ENCODE measurements at regions of chr9 and their contacts with region 1.

Region 1: DNA sequence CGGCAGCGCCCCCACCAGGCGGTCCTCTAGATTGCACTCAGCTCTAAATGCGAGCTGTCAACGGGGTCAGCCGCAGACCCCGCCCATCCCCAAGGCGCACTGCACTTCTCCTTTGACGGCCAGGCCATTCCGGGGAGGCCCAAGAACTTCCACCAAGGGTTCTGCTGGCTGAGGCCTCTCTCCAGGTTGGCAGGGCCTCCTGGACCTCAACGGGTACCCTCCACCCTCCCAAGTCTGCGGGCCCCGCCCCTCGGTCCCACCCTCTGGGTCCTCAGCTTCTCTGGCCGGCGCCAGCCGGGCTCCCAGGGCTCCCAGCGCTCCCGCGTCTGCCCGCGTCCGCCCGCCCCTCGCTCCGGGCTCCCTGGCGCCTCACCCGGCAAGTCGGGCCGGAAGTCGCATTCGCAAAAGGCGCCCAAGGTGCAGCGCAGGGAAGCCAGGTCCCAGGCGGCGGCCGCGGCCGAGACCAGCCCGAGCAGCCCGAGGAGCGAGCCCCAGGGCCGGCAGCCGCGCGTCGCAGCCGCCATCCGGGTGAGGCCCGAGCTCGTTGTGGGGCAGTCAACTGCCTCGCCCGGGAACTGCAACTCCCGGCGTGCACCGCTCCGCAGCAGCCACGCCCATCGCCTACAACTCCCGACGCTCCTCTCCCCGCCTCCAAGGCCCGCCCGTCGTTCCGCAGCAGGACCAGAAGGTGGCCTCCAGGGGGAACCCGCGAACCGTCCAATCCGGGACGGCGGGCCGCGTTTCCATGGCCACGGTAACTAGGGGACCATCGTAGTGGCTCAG is at the start of gene TOR2A:
- DNase-seq: peak; percentile 96
- H3K4me3 ChIP-seq: peak within 1 kb of the TSS; percentile 45 to 55
- H3K27ac ChIP-seq: peak within 1 kb of the TSS; percentile 83 to 89
- H3K4me1 ChIP-seq: no peaks in the 10 kb centered on the region
- H3K27me3 ChIP-seq: no peaks in the 10 kb centered on the region
- CTCF ChIP-seq: peak; percentile 89 to 100 (median 98)
- POLR2A ChIP-seq: peak; percentile 90
- total RNA-seq, gene TOR2A: 20.4 to 24.1 TPM

Region 2: DNA sequence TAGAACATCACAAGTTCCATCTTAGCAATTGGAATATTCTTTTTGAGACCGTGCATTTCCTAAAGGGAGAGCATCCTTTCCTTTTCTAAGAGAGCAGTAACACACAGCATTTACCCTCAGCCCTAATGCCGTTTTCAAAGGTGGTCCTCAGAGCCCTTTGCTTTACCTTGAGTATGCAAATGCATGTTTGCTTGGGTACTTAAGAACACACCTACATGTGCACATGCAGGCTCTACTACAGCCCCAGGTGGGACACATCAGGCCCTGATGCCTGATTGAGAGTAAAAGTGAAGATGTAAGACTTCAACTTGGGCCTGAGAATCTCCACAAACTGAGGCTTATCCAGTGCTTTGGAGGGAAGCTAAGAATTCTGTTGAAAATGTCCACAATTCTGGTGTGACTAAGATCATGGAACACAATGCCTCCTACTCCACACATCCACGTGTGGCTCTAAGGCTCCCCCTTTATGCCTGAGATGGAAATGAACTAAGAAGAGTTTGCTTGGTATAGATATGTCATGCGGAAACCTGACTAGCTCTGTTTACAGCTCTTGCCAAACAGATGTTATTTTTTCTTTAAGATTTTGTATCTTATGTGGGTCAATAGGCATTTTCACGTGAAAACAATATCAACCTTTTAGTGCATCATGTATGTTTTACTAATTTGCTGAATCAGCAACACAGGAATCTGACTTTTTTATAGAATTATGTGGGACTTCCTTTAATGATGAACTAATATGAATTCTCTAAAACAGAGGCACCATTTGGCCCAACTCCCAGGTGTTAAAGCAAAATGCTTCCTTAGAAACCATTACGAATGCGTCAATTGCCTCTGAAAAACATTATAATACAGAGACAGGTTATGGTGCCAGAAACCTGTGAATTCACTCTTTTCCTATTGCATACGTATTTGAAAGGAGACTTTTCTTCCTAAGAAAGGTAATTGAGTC is 386.8 kb before region 1 on chr9:
- intact Hi-C with region 1: no loop called
- DNase-seq: no peak
- H3K4me3 ChIP-seq: no peak overlapping the region
- H3K27ac ChIP-seq: no peak overlapping the region
- H3K4me1 ChIP-seq: no peaks in the 10 kb centered on the region
- H3K27me3 ChIP-seq: no peaks in the 10 kb centered on the region
- CTCF ChIP-seq: peak in 3 of 4 experiments; percentile 12 to 64 (median 39)
- POLR2A ChIP-seq: no peak

Region 3: DNA sequence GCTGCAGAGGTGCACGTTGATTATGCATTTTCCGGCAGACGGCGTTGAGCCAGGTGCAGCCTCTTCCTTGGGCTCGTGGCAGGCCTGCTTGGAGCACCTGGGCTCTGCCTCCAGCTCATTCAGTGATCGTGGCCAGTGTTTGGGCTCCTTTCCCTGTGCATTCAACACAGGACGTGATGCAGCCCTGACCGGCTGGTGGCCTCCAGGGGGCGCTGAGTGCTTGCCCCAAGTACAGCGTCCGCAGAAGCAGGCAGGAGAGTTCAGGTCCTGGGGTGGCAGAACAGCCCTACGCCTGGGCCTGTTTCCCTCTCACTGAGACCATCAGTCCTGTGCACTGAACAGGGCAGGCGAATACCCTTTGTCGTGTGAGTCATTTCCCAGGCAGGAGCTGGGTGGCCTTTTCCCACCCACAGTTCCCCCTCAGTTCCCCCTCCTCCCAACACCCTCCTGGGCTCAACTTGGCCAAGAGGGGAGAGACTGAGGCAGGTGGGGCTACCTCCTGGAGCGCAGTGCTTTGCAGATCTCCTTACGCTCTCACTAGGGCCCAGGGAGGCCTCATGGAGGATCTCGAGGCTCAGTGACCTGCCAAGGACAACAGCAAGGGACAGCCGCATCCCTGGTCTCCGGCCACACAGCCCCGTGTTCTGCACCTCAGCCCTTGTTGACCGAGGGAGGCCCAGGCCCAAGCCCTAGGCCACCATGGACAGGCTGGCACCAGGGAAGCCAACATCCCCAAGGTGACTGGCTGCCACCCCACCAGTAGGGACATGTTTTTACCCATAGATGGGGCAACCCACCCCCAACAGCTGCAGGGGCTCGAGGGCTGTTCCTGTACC is 230.8 kb before region 1 on chr9:
- intact Hi-C with region 1: loop called (anchors 5 kb)
- DNase-seq: peak; percentile 88
- H3K4me3 ChIP-seq: no peak overlapping the region
- H3K27ac ChIP-seq: peak overlapping the region; percentile 55 to 67
- H3K4me1 ChIP-seq: peaks cover 8% of the 10 kb centered on the region
- H3K27me3 ChIP-seq: no peaks in the 10 kb centered on the region
- CTCF ChIP-seq: peak; percentile 81 to 96 (median 90)
- POLR2A ChIP-seq: no peak

Region 4: DNA sequence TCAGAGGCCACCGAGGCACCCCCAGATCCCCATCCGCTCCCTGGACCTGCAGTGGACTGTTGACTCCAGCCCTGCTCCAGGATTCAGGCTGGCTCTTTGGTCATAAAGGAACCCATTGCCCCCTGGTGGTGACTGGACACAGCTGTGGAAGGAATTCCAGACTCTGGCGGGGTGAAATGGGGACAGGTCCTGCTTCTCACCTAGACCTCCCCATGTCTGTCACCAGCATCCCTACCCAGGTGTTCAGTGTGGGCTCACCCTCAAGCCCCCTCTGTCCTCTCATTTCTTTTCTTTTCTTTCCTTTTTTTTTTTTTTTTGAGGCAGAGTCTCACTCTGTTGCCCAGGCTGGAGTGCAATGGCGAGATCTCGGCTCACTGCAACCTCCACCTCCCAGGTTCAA is 148.4 kb before region 1 on chr9:
- intact Hi-C with region 1: loop called (anchors 2 kb)
- DNase-seq: peak; percentile 88
- H3K4me3 ChIP-seq: no peak overlapping the region
- H3K27ac ChIP-seq: no peak overlapping the region
- H3K4me1 ChIP-seq: peaks cover 6% of the 10 kb centered on the region
- H3K27me3 ChIP-seq: no peaks in the 10 kb centered on the region
- CTCF ChIP-seq: peak; percentile 88 to 97 (median 92)
- POLR2A ChIP-seq: no peak

Region 5: DNA sequence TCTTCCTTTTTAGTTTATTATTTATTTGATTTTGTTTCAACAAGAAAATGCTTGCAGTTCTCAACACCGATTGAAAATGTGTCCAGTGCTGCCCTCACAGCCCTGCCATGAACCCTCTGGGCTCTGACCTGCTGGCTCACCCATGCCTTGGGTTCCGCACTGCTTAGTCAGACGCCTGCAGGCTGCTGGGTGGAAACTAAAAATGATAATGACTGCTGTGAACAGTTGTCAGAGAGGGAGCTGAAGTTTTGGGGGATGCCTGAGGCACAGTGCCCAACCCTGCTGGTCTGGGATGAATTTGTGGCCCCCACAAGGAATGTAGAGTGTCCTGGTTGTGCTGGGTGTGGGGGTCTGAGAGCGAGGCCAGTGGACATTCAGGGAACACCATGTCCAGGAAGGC is 50.4 kb before region 1 on chr9:
- intact Hi-C with region 1: no loop called
- DNase-seq: no peak
- H3K4me3 ChIP-seq: no peak overlapping the region
- H3K27ac ChIP-seq: no peak overlapping the region
- H3K4me1 ChIP-seq: no peaks in the 10 kb centered on the region
- H3K27me3 ChIP-seq: no peaks in the 10 kb centered on the region
- CTCF ChIP-seq: no peak
- POLR2A ChIP-seq: no peak

Region 6: DNA sequence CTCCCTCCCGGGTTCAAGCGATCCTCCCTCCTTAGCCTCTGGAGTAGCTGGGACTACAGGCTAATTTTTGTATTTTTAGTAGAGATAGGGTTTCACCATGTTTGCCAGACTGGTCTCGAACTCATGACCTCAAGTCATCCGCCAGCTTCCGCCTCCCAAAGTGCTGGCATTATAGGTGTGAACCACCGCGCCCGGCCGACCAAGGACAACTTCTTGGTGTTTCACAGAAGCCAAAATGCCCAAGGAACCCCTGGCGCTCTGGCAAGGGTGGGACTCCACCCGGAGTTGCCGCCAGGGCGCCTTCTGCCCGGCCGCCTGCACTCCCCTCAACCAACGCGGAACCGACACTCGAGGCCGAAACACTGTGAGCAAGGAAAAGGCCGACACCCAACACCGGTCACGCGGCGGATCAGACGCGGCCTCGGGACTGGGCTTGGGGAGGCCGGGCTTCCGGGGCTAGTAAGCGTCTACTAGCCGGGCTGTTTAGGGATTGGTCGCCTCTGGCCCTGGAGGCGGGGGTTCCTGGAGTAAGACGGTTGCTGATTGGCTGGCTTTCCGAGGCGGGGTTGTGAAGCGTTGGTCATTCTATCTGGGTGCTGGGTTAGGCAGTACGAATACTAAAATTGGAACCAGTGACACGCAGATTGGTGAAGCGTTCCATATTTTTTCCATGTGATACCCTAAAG is 35.8 kb before region 1 on chr9:
- intact Hi-C with region 1: no loop called
- DNase-seq: peak; percentile 94
- H3K4me3 ChIP-seq: peak overlapping the region; percentile 9 to 22
- H3K27ac ChIP-seq: peak overlapping the region; percentile 66 to 68
- H3K4me1 ChIP-seq: no peaks in the 10 kb centered on the region
- H3K27me3 ChIP-seq: no peaks in the 10 kb centered on the region
- CTCF ChIP-seq: peak in 2 of 4 experiments; percentile 20 to 25
- POLR2A ChIP-seq: peak; percentile 58

Region 7: DNA sequence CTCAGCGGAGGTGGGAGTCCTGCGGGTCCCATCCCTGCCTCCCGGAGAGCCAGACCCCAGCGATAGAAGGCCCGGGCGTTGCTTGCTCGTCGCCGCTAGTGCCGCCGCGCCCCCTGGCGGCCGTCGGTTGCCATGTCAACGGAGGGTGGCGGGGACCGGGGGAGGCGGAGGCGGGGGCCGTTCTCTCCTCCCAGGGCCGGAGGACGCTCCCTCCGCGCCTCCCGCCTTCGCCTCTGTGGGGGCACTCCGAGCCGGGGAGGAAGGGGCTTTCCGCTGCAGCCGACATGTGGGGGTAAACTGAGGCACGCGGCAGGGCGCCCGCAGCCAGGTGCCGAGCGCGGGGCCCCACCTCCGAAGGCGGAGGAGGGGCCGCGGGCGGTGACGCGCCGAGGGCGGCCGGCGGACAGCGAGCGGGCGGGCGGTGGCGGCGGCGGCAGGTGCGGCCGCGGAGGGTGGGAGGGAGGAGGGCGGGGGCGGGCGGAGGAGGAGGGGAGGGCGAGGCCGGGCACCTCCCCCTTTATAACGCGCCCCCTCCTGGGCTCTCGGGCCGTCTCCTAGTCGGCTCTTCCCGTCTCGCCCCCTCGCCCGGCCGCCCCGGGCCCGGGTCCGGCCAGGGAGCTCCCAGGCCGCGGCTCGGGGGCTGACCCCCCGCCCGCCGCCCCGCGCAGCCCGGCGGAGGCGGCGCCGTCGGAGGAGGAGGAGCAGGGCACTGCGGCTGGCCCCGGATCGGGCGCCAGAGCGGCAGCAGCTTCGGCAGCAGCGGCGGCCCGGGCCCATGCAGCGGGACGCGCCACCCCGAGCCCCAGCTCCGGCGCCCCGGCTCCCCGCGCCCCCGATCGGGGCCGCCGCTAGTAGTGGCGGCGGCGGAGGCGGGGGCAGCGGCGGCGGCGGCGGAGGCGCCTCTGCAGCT is 50.3 kb after region 1 on chr9:
- intact Hi-C with region 1: loop called (anchors 1 kb)
- DNase-seq: peak; percentile 82
- H3K4me3 ChIP-seq: peak overlapping the region; percentile 95 to 96
- H3K27ac ChIP-seq: peak overlapping the region; percentile 93 to 96
- H3K4me1 ChIP-seq: peaks cover 8% of the 10 kb centered on the region
- H3K27me3 ChIP-seq: no peaks in the 10 kb centered on the region
- CTCF ChIP-seq: peak; percentile 92 to 99 (median 96)
- POLR2A ChIP-seq: no peak

Region 8: GRCh38 chr9:127877566-127877998 is 142.6 kb after region 1 on chr9 and contains the start of gene AK1:
- intact Hi-C with region 1: loop called (anchors 5 kb)
- DNase-seq: peak; percentile 75
- H3K4me3 ChIP-seq: peak within 1 kb of the TSS; percentile 45 to 52
- H3K27ac ChIP-seq: peak within 1 kb of the TSS in 1 of 2 donors; percentile 51
- H3K4me1 ChIP-seq: peaks cover 8% of the 10 kb centered on the region
- H3K27me3 ChIP-seq: no peaks in the 10 kb centered on the region
- CTCF ChIP-seq: no peak
- POLR2A ChIP-seq: peak; percentile 59
- total RNA-seq, gene AK1: 22.2 to 123 TPM

Region 9: DNA sequence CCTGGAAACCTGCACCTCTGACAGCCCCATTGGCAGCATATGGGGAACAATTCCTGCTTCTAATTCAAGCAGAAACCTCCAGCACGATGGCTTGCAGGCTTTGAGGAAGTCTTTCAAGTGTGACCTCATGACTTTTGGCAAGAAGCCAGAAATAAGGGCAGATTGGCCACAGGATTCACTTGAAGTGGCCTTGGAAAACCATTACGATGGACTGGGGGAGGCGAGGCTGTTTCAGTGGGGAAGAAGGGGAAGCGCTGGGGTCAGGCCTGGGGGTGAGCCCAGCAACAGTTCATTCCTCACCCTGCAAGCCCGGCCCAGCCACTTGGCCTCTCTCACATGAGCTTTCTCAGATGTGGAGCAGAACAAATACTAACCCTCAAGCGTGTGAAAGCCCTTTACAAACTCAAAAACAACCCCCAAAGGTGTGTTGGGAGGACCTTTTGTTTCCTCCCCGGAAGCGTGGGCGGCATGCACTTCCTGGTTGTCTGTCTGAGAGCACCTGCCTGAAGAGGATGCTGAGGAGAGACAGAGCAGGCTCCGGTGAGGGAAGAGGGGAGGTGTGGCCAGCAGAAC is 272.7 kb after region 1 on chr9:
- intact Hi-C with region 1: no loop called
- DNase-seq: peak; percentile 21
- H3K4me3 ChIP-seq: no peak overlapping the region
- H3K27ac ChIP-seq: peak overlapping the region in 1 of 2 donors; percentile 6
- H3K4me1 ChIP-seq: no peaks in the 10 kb centered on the region
- H3K27me3 ChIP-seq: no peaks in the 10 kb centered on the region
- CTCF ChIP-seq: no peak
- POLR2A ChIP-seq: no peak

Measured in prostate gland (tissue), 2 donors.